Transverse colon (tissue), 4 donors: ENCODE measurements at regions of chr1 and their contacts with region 1.

Region 1: GRCh38 chr1:84772428-84772943 is 82.2 kb upstream of the SSX2IP start:
- DNase-seq: peak; percentile 86
- H3K4me3 ChIP-seq: no peak overlapping the region
- H3K27ac ChIP-seq: no peak overlapping the region
- H3K4me1 ChIP-seq: no peaks in the 10 kb centered on the region
- H3K27me3 ChIP-seq: no peaks in the 10 kb centered on the region
- CTCF ChIP-seq: peak; percentile 80 to 96 (median 90)
- EP300 ChIP-seq: no peak
- POLR2A ChIP-seq: no peak

Region 2: GRCh38 chr1:84442256-84442655 is 330.2 kb before region 1 on chr1:
- in situ Hi-C with region 1: loop called in 1 of 4 experiments (anchors 10 kb)
- intact Hi-C with region 1: loop called (anchors 5 kb)
- DNase-seq: no peak
- H3K4me3 ChIP-seq: no peak overlapping the region
- H3K27ac ChIP-seq: no peak overlapping the region
- H3K4me1 ChIP-seq: peaks cover 0 to 12% (median 3%) of the 10 kb centered on the region in 4 donors
- H3K27me3 ChIP-seq: no peaks in the 10 kb centered on the region
- CTCF ChIP-seq: peak; percentile 26 to 59 (median 45)
- EP300 ChIP-seq: no peak
- POLR2A ChIP-seq: no peak